H1 (cell line): ENCODE measurements at regions of chr5 and their contacts with region 1.

Region 1: GRCh38 chr5:175464074-175464941 is 14.1 kb upstream of the SFXN1 start:
- DNase-seq: peak in 1 of 2 experiments; percentile 87
- H3K4me3 ChIP-seq: no peak overlapping the region
- H3K27ac ChIP-seq: no peak overlapping the region
- H3K4me1 ChIP-seq: no peaks in the 10 kb centered on the region; a peak in 1 of 7 replicates
- H3K27me3 ChIP-seq: no peaks in the 10 kb centered on the region
- CTCF ChIP-seq: peak; percentile 63 to 87 (median 70)
- EP300 ChIP-seq: no peak
- POLR2A ChIP-seq: no peak
- RAD21 ChIP-seq: peak; percentile 68 to 81

Region 2: GRCh38 chr5:174951146-174951780 is 513.0 kb before region 1 on chr5:
- CTCF ChIA-PET with region 1: interaction called, 18 read pairs
- POLR2A ChIA-PET with region 1: no interaction called
- DNase-seq: peak; percentile 49 to 60
- H3K4me3 ChIP-seq: no peak overlapping the region
- H3K27ac ChIP-seq: no peak overlapping the region
- H3K4me1 ChIP-seq: no peaks in the 10 kb centered on the region
- H3K27me3 ChIP-seq: no peaks in the 10 kb centered on the region; a peak in 1 of 7 replicates
- CTCF ChIP-seq: peak; percentile 75 to 95 (median 88)
- EP300 ChIP-seq: no peak
- POLR2A ChIP-seq: no peak
- RAD21 ChIP-seq: peak; percentile 100

Region 3: GRCh38 chr5:175243441-175243840 is 220.9 kb before region 1 on chr5:
- CTCF ChIA-PET with region 1: interaction called, 10 read pairs
- POLR2A ChIA-PET with region 1: no interaction called
- DNase-seq: peak in 1 of 2 experiments; percentile 52
- H3K4me3 ChIP-seq: no peak overlapping the region
- H3K27ac ChIP-seq: no peak overlapping the region
- H3K4me1 ChIP-seq: no peaks in the 10 kb centered on the region
- H3K27me3 ChIP-seq: no peaks in the 10 kb centered on the region
- CTCF ChIP-seq: peak in 2 of 3 experiments; percentile 25 to 35; a peak in 3 of 4 replicates
- EP300 ChIP-seq: no peak
- POLR2A ChIP-seq: no peak
- RAD21 ChIP-seq: peak; percentile 42 to 59

Region 4: DNA sequence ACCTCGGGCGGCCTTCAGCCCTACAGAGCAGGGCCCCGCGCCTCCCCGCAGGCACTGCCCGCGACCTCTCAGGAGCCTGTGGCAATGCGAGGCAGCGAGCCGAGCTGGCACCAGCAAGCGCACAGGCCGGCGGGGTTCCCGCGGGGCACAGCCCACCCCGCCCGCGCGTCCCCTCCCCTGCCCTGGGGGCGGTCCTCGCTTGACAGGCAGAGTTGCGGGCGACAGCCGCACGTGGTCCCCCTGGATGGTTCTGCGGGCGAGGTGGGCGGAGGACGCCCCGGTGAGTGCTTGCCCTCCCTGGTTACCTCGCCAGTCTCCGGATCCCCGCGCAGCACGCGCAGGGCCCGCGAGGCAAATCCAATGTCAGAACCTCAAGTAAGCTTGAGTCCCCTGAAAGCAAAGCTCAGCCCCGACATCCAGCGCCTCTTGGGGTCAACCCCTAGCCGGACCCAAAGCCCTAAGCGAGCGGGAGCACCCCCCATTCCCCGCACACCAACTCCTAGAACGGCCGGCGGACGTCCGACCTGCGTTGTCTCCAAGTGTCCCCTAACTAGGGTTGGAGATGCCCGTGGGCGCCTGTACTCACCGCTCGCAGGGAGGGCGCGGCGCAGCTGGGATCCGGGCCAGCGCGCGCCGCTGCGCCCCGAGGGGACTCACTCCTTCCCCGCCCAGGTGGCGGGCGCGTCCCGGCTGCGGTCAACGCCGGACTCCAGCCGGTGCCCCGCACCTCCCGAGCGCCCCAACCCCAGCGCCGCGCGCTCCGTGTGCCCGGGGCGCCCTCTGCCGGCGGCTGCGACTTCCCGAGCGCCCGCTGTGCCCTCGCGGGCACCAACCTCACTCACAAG is 20.0 kb before region 1 on chr5 and contains the start of gene DRD1:
- CTCF ChIA-PET with region 1: interaction called, 12 read pairs
- POLR2A ChIA-PET with region 1: no interaction called
- DNase-seq: peak in 1 of 2 experiments; percentile 95
- H3K4me3 ChIP-seq: peak within 1 kb of the TSS; percentile 26 to 67 (median 52)
- H3K27ac ChIP-seq: no peak within 1 kb of the TSS
- H3K4me1 ChIP-seq: peaks cover 3 to 12% (median 8%) of the 10 kb centered on the region in 4 experiments; a peak in 6 of 7 replicates
- H3K27me3 ChIP-seq: peaks cover 11 to 42% (median 38%) of the 10 kb centered on the region in 4 experiments
- CTCF ChIP-seq: peak; percentile 75 to 95 (median 77)
- EP300 ChIP-seq: no peak
- POLR2A ChIP-seq: no peak
- RAD21 ChIP-seq: peak; percentile 85 to 95
- total RNA-seq, gene DRD1: 0.08 and 0.19 TPM in 2 replicates

Region 5: DNA sequence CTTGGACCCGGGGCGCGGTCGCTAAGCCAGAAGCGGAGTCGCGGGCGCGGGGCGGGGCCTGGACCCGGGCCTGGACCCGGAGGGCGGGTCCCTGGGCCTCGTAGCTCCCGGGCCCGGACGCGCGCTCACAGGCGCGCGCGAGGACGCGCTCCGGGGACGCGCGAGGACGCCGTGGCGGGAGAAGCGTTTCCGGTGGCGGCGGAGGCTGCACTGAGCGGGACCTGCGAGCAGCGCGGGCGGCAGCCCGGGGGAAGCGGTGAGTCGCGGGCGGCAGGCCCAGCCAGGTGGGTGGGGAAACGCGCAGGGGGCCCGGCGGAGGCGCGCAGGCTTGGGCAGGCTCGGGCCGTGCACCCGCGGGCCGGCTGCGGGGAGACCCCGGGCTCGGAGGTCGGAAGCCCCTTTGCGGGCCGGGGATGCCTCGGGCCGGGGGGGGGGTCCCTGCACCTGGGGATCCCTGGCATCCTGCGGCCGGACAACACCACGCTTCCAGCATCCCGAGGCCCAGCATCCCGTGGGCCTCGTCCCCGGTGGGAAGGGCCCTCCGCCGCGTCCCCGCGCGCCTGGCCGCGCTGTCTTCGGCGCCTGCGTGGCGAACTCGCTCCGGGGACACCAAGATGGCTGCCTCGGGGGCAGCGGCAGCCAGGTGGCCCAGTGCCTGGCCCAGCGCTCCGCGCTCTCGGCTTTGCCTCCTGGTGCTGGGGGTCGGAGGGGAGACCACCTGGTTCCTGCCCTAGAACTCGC is 14.2 kb after region 1 on chr5 and contains the start of gene SFXN1:
- CTCF ChIA-PET with region 1: interaction called, 13 read pairs
- POLR2A ChIA-PET with region 1: interaction called, 7 read pairs
- DNase-seq: peak in 1 of 2 experiments; percentile 88
- H3K4me3 ChIP-seq: peak within 1 kb of the TSS; percentile 74 to 98 (median 88)
- H3K27ac ChIP-seq: peak within 1 kb of the TSS; percentile 61; the same call in 1 of the 2 replicates
- H3K4me1 ChIP-seq: peaks cover 2 to 6% (median 4%) of the 10 kb centered on the region in 4 experiments; a peak in 6 of 7 replicates
- H3K27me3 ChIP-seq: peaks cover 0 to 6% (median 2%) of the 10 kb centered on the region in 4 experiments; a peak in 2 of 7 replicates
- CTCF ChIP-seq: no peak
- EP300 ChIP-seq: no peak
- POLR2A ChIP-seq: peak; percentile 16 to 84
- RAD21 ChIP-seq: no peak
- total RNA-seq, gene SFXN1: 94.1 and 97.6 TPM in 2 replicates

Region 6: DNA sequence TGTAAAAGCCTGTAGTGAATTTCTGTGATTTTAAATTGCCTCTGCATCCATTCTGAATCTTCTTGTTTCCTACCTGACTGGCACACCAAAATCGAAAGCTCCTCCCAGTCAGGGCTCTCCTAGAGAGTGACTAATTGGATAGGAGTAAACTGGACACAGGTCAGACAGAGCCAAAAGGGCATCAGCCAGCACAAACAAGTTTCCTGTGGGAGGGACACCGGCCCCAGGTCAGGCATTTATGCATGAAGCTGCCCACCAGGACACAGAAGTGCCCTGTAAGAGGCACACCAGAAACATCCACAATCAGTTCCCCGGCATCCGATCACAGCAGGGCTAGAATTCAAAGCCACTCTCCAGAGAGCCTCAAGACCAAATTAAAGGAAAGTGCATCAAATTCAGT is 92.5 kb after region 1 on chr5:
- CTCF ChIA-PET with region 1: no interaction called
- POLR2A ChIA-PET with region 1: no interaction called
- DNase-seq: no peak
- H3K4me3 ChIP-seq: no peak overlapping the region
- H3K27ac ChIP-seq: no peak overlapping the region
- H3K4me1 ChIP-seq: peaks cover 5 to 14% (median 10%) of the 10 kb centered on the region in 4 experiments; a peak in 6 of 7 replicates
- H3K27me3 ChIP-seq: no peaks in the 10 kb centered on the region
- CTCF ChIP-seq: no peak
- EP300 ChIP-seq: no peak
- POLR2A ChIP-seq: no peak
- RAD21 ChIP-seq: no peak